Posterior cingulate gyrus (tissue), 11 donors: ENCODE measurements at regions of chr4 and their contacts with region 1.

Region 1: GRCh38 chr4:157045507-157046127 is 30.3 kb upstream of the GLRB start:
- DNase-seq: peak in 1 of 10 donors; percentile 16

Region 2: DNA sequence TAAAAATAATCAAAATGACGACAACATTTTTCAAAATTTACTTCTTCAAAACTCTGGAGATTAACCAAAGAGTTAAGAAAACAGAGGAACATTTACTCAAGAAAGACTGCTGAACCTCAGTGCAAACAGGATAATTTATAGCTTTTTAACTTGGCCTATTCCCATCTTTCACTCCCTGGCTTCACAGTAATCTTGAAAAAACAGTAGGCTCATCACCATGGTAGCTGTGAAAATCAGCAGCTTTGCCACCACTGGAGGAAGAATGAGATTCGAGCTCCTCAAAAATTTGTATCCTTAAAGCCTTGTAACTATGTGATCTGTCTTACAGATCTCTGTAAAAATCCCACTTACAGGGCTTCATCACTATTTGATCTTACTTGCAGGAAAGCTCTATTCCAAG is 644.2 kb before region 1 on chr4:
- intact Hi-C with region 1: no loop called
- DNase-seq: no peak

Region 3: DNA sequence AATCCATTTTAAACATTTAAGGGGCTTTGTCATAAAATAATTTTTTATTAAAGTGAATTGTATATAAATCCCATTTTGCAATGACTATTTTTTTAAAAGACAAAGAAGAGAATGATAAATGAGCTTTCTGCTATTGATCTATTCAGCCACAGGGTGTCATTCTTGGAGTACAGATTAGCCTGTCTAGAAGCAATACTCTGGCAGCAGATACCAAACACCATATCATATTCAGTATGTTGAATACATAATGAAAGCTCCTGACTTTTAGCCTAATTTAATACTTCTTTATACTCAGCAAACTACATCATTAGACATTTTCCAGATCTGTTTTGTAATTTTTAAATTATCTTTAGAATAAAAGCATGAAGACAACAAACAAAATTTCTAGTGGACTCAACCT is 570.3 kb before region 1 on chr4:
- intact Hi-C with region 1: loop called (anchors 10 kb)
- DNase-seq: no peak

Region 4: GRCh38 chr4:156594624-156595023 is 451.0 kb before region 1 on chr4:
- intact Hi-C with region 1: loop called (anchors 5 kb)
- DNase-seq: peak; percentile 13 to 91 (median 44)

Region 5: DNA sequence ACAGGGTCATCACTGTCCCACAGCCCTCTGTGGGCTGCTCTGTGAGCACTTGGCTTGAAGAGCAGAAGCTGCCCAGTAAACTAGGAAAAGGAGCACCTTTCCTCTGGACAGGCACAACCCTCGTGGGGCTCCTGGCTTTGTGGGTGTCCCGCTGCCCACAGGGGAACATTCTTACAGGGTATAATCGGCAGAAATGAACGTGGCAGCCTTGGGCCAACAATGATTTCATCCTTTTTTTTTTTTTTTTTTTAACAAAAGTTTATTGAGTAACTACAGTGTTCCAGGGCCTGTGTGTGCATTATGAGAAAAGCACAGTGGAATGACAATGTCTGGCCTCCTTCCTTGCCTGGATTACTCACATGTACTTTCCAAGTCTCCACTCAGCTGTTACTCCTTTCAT is 271.2 kb before region 1 on chr4:
- intact Hi-C with region 1: no loop called
- DNase-seq: no peak

Region 6: DNA sequence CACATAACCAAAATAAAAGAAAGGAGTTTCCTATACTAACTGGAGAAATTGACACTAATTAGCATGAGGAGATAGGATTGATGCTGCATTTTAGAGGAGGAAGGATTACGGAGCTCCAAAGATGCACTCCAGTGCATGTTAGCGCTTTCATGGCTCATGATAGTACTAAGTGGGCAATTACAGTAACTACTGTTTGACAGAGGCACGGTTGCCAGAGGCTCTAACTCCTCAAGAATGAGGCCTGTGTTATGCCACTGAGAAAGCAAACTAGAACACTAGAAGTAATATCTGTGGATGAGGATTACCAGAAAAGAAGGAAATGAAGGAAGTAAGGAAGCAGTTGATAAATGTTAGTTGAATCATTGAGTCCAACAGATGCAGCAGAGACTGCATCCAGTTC is 54.5 kb before region 1 on chr4:
- intact Hi-C with region 1: no loop called
- DNase-seq: no peak

Region 7: DNA sequence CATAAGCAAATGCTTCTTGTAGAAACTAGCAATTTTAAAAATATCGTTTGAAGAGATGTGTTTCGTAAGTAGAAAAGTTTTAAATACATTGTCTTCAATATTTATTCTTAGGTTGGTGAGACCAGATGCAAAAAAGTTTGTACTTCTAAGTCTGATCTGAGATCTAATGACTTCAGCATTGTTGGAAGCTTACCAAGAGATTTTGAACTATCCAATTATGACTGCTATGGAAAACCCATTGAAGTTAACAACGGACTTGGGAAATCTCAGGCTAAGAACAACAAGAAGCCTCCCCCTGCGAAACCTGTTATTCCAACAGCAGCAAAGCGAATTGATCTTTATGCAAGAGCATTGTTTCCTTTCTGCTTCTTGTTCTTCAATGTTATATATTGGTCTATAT is 124.7 kb after region 1 on chr4:
- intact Hi-C with region 1: no loop called
- DNase-seq: no peak